ENCODE measurements at regions of chr14 and their contacts with region 1.

Region 1: DNA sequence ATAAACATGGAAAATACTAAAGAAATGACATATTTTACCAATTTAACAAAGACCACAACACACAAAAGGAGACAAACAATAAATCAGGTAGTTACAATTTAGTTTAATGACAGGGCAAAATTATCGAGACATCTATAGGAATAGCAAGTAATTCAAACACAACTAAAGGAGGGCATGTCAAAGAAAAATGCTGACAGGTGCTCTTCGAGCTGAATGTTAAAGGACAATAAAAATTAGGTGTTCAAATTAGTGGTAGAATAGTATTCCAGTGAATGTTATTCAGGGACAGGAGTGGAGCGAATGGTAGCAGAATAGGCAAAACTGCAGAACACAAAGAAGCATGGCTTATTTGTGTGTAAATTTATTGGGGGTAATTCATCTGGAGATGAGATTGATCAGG is 1004.3 kb upstream of the FBXO33 start:
- DNase-seq: no peak
- ATAC-seq: no peak
- H3K4me3 ChIP-seq: no peak overlapping the region
- H3K4me3 Mint-ChIP-seq: no peak overlapping the region
- H3K27ac ChIP-seq: no peak overlapping the region
- H3K27ac Mint-ChIP-seq: no peak overlapping the region
- H3K4me1 ChIP-seq: no peaks in the 10 kb centered on the region
- H3K4me1 Mint-ChIP-seq: no peaks in the 10 kb centered on the region
- H3K27me3 ChIP-seq: no peaks in the 10 kb centered on the region
- H3K27me3 Mint-ChIP-seq: no peaks in the 10 kb centered on the region
- CTCF ChIP-seq: no peak

Region 2: GRCh38 chr14:40386433-40386832 is 50.1 kb before region 1 on chr14:
- CTCF ChIA-PET with region 1: no interaction called
- POLR2A ChIA-PET with region 1: no interaction called
- intact Hi-C with region 1: no loop called
- DNase-seq: no peak
- ATAC-seq: no peak
- H3K4me3 ChIP-seq: no peak overlapping the region
- H3K4me3 Mint-ChIP-seq: no peak overlapping the region
- H3K27ac ChIP-seq: no peak overlapping the region
- H3K27ac Mint-ChIP-seq: no peak overlapping the region
- H3K4me1 ChIP-seq: no peaks in the 10 kb centered on the region
- H3K4me1 Mint-ChIP-seq: no peaks in the 10 kb centered on the region
- H3K27me3 ChIP-seq: no peaks in the 10 kb centered on the region
- H3K27me3 Mint-ChIP-seq: no peaks in the 10 kb centered on the region
- CTCF ChIP-seq: no peak

Region 3: DNA sequence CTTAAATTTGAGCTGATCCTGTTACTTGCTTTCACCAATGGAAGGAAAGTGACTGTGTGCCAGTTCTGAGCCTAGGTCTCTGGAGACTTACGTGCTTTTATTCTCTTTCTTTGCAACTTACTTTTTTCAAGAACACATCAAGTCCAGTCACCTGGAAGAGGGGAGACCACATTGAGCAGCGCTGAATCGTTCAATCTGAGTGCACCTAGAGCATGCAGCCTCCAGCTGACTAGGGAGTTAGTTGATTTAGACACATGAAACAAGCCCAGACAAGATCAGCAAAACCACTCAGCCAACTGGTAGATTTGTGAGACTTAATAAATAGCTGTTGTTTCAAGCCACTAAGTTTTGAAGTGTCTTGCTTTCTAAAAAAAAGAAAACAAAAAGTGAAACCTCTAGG is 10.5 kb after region 1 on chr14:
- CTCF ChIA-PET with region 1: no interaction called
- POLR2A ChIA-PET with region 1: no interaction called
- intact Hi-C with region 1: loop called in 1 of 2 experiments (anchors 1 kb)
- DNase-seq: no peak
- ATAC-seq: no peak
- H3K4me3 ChIP-seq: no peak overlapping the region
- H3K4me3 Mint-ChIP-seq: no peak overlapping the region
- H3K27ac ChIP-seq: no peak overlapping the region
- H3K27ac Mint-ChIP-seq: no peak overlapping the region
- H3K4me1 ChIP-seq: no peaks in the 10 kb centered on the region
- H3K4me1 Mint-ChIP-seq: no peaks in the 10 kb centered on the region
- H3K27me3 ChIP-seq: no peaks in the 10 kb centered on the region
- H3K27me3 Mint-ChIP-seq: no peaks in the 10 kb centered on the region
- CTCF ChIP-seq: no peak

Region 4: DNA sequence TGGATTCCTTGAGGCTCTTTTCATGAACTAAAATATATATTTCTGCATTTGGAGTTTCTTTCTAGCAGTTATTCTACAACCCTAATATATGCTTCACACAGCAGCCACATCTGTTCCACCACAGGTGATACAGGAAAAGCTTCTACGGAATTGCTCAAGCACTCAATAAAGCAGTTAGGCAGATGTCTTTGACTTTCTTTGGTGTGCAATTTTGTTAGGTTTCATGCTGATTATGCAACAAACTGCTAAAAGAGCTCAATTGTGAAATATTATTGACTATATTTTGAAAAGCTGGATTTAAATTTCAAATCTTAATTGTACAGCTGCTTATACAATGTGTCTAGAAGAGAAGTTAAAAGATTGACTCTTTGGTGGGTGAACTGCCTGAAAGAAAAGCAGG is 51.3 kb after region 1 on chr14:
- CTCF ChIA-PET with region 1: no interaction called
- POLR2A ChIA-PET with region 1: no interaction called
- intact Hi-C with region 1: no loop called
- DNase-seq: no peak
- ATAC-seq: no peak
- H3K4me3 ChIP-seq: no peak overlapping the region
- H3K4me3 Mint-ChIP-seq: no peak overlapping the region
- H3K27ac ChIP-seq: no peak overlapping the region
- H3K27ac Mint-ChIP-seq: no peak overlapping the region
- H3K4me1 ChIP-seq: no peaks in the 10 kb centered on the region
- H3K4me1 Mint-ChIP-seq: no peaks in the 10 kb centered on the region
- H3K27me3 ChIP-seq: no peaks in the 10 kb centered on the region
- H3K27me3 Mint-ChIP-seq: no peaks in the 10 kb centered on the region
- CTCF ChIP-seq: no peak